Lower leg skin (tissue), 4 donors: ENCODE measurements at regions of chr12 and their contacts with region 1.

Region 1: DNA sequence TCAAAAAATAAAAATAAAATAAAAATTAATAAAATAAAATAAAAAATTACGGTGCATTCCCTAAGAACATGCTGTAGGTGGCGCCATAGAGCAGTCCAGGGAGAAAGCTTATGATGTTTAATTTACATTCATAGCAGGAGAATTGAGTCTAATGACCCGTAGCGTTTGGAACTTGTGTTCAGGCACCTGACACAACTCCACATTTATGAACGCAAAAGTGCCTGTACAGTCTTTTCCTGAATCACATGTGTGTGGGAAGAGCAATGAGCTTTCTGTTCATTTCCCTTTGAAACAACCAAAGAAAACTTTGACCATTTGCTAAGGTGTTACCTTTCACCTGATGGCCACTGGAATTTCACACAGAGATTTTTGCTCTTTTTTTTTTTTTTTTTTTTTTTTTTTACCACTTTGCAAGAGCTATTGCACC is 60.6 kb upstream of the KCNA1 start:
- DNase-seq: no peak
- H3K4me3 ChIP-seq: no peak overlapping the region
- CTCF ChIP-seq: no peak
- POLR2A ChIP-seq: no peak

Region 2: GRCh38 chr12:3809347-3810015 is 1039.6 kb before region 1 on chr12:
- intact Hi-C with region 1: loop called (anchors 10 kb)
- DNase-seq: no peak
- H3K4me3 ChIP-seq: no peak overlapping the region
- CTCF ChIP-seq: no peak
- POLR2A ChIP-seq: no peak